Activated CD4-positive, alpha-beta memory T cell treated with anti-CD3 and anti-CD28 coated beads, Interleukin-2, amount 10 ng/mL, durations not matched to agents 7 days and 5 days (primary cell): ENCODE measurements at regions of chr1 and their contacts with region 1.

Region 1: DNA sequence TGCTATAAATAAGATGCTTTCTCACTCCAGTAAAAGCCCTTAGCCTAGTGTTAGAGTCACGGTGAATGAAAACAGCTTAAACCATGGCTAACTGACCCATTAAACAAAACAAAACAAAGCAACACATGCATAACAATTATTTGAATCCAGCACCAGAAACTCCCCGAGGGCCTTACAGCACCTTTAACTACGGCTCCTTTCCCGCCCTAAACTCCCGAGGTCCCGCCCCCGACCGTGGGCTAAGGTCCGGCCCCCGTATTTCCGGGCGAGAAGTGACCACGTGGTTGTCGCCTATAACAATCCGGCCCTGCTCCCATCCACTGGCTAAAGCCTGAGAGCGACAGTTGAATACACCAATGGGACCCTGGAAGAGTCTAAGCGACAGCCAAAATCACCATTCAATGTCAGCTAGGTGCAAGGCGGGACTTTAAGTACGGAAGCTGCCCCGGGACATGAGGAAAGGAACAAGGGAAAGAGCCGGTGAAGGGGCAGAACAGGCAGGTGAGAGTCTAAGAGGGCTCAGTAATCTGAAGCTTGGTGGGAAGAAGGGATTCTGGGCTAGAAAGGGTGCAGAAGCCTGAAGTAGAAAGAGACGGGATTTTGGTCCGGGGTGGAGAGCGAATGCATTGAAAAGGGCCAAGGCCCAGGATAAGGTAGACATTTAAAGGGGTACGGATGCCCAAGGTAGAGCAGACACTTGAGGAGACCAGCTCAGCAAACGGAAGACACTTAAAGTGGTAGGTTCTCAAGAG is at the start of gene FLAD1:
- DNase-seq: peak; percentile 97
- H3K4me3 Mint-ChIP-seq: no peak within 1 kb of the TSS
- H3K27ac Mint-ChIP-seq: no peak within 1 kb of the TSS
- H3K4me1 Mint-ChIP-seq: peaks cover 28% of the 10 kb centered on the region
- H3K27me3 Mint-ChIP-seq: no peaks in the 10 kb centered on the region
- total RNA-seq, gene FLAD1: 34.7 to 35.1 TPM

Region 2: GRCh38 chr1:154955718-154956543 is 27.1 kb before region 1 on chr1 and contains the start of gene PBXIP1:
- CTCF ChIA-PET with region 1: interaction called, 10 read pairs
- POLR2A ChIA-PET with region 1: interaction called, 21 read pairs
- DNase-seq: peak; percentile 88
- H3K4me3 Mint-ChIP-seq: peak within 1 kb of the TSS; percentile 96
- H3K27ac Mint-ChIP-seq: peak within 1 kb of the TSS; percentile 97
- H3K4me1 Mint-ChIP-seq: peaks cover 85% of the 10 kb centered on the region
- H3K27me3 Mint-ChIP-seq: no peaks in the 10 kb centered on the region
- total RNA-seq, gene PBXIP1: 169 TPM

Region 3: GRCh38 chr1:154961497-154962262 is 21.4 kb before region 1 on chr1 and contains the start of gene PYGO2:
- CTCF ChIA-PET with region 1: interaction called, 4 read pairs
- POLR2A ChIA-PET with region 1: interaction called, 21 read pairs
- DNase-seq: peak; percentile 83
- H3K4me3 Mint-ChIP-seq: peak within 1 kb of the TSS; percentile 97
- H3K27ac Mint-ChIP-seq: peak within 1 kb of the TSS; percentile 89
- H3K4me1 Mint-ChIP-seq: peaks cover 56% of the 10 kb centered on the region
- H3K27me3 Mint-ChIP-seq: no peaks in the 10 kb centered on the region
- total RNA-seq, gene PYGO2: 48.7 to 49.7 TPM

Region 4: DNA sequence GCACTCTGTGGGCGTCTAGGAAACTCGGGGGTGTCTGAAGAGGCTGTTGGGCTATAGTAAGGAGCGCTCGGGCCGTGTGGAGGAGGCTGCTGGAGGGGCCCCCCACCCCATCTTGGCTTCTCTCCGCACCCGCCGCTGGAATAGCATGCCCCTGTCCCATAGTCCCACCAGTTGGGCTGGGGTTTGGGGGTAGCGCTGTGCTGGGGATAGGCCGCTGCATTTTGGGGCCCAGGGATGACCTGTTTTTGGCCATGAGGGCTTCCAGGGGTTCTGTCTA is 96.1 kb after region 1 on chr1:
- CTCF ChIA-PET with region 1: no interaction called
- POLR2A ChIA-PET with region 1: no interaction called
- DNase-seq: no peak
- H3K4me3 Mint-ChIP-seq: peak overlapping the region; percentile 13
- H3K27ac Mint-ChIP-seq: no peak overlapping the region
- H3K4me1 Mint-ChIP-seq: peaks cover 56% of the 10 kb centered on the region
- H3K27me3 Mint-ChIP-seq: peaks cover 59% of the 10 kb centered on the region

Region 5: GRCh38 chr1:155117617-155118016 is 134.5 kb after region 1 on chr1:
- CTCF ChIA-PET with region 1: no interaction called
- POLR2A ChIA-PET with region 1: no interaction called
- DNase-seq: no peak
- H3K4me3 Mint-ChIP-seq: no peak overlapping the region
- H3K27ac Mint-ChIP-seq: no peak overlapping the region
- H3K4me1 Mint-ChIP-seq: peaks cover 2% of the 10 kb centered on the region
- H3K27me3 Mint-ChIP-seq: peaks cover 36% of the 10 kb centered on the region